Naive thymus-derived CD8-positive, alpha-beta T cell (primary cell): ENCODE measurements at regions of chr11 and their contacts with region 1.

Region 1: GRCh38 chr11:95231127-95231880 is at the start of gene SESN3:
- DNase-seq: peak; percentile 94 to 99 (median 99)
- ATAC-seq: peak; percentile 88 to 91
- H3K4me3 Mint-ChIP-seq: peak within 1 kb of the TSS in 8 of 10 donors; percentile 89 to 98 (median 94)
- H3K27ac Mint-ChIP-seq: peak within 1 kb of the TSS; percentile 66 to 95 (median 86)
- H3K4me1 Mint-ChIP-seq: peaks cover 8 to 65% (median 32%) of the 10 kb centered on the region in 4 donors
- H3K27me3 Mint-ChIP-seq: no peaks in the 10 kb centered on the region
- polyA plus RNA-seq, gene SESN3: 1.3 to 1.8 (median 1.7) TPM

Region 2: DNA sequence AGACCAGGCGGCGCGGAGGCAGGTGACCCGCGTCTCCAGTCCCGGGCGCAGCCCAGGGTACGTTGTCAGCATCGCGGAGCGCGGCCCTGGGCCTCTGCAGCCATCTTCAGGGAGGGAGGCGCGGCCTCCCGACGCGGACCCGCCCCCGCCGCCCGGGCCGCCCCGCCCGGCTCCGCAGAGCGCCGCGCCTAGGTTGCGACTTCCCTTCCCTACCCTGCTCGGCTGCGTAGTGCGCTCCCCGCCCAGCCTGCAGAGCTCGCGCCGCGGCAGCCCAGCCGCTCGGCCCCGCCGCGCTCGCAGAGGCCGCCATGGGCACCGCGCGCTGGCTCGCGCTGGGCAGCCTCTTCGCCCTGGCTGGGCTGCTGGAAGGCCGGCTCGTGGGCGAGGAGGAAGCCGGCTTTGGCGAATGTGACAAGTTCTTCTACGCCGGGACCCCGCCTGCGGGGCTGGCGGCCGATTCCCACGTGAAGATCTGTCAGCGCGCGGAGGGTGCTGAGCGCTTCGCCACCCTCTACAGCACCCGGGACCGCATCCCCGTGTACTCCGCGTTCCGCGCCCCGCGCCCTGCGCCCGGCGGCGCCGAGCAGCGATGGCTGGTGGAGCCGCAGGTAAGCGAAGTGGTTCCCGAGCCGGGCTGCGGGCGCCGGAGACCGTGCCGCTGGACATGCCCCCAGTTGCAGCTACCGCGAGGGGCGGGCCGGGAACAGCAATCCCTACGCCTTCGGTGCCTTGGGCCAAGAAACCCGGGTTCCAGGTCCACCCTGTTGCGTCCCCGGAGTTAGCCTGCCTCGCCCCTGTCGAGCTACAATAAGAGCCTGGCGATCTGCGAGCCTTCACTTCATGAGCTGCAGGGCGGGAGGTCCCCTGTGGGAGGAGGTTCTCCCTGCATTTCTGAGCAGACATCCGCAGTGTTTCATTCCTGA is 141.4 kb before region 1 on chr11 and contains the start of gene ENDOD1:
- POLR2A ChIA-PET with region 1: interaction called, 11 read pairs
- DNase-seq: peak; percentile 78 to 89 (median 86)
- ATAC-seq: peak; percentile 91 to 94
- H3K4me3 Mint-ChIP-seq: peak within 1 kb of the TSS; percentile 87 to 97 (median 91)
- H3K27ac Mint-ChIP-seq: peak within 1 kb of the TSS; percentile 95 to 99 (median 98)
- H3K4me1 Mint-ChIP-seq: peaks cover 28 to 57% (median 46%) of the 10 kb centered on the region in 4 donors
- H3K27me3 Mint-ChIP-seq: no peaks in the 10 kb centered on the region
- polyA plus RNA-seq, gene ENDOD1: 3.9 to 10.1 (median 6.9) TPM

Region 3: DNA sequence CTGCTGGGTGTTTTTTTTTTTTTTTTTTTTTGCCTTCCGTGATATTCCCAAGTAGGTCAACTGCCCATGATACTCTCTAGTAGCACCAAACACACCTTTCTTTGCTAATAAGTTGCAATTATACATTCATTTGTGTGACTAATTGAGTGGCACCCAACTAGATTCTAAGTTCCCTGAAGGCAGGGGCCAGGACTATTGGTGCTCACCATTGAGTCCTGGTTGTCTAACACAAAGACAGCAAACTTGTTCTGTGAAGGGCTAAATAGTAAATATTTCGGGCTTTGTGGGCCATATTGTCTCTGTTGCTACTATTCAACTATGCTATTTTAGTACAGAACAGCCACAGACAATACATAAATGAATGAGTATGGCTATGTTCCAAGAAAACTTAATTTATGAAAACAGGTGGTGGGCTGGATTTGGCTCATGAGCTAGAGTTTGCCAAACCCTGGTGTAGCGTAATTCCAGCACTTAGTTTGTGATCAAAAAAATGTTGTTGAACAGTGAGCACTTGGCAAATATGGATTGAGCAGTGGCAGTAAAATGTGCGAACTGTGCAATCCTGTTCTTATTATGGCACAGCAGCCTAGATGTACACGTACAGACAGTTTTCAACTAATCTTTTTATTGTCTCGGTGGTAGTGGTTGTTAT is 130.3 kb before region 1 on chr11:
- POLR2A ChIA-PET with region 1: no interaction called
- DNase-seq: no peak
- ATAC-seq: no peak
- H3K4me3 Mint-ChIP-seq: no peak overlapping the region
- H3K27ac Mint-ChIP-seq: no peak overlapping the region
- H3K4me1 Mint-ChIP-seq: peaks cover 9 to 40% (median 27%) of the 10 kb centered on the region in 4 donors
- H3K27me3 Mint-ChIP-seq: no peaks in the 10 kb centered on the region

Region 4: GRCh38 chr11:95212609-95213008 is 18.7 kb before region 1 on chr11:
- POLR2A ChIA-PET with region 1: interaction called, 18 read pairs
- DNase-seq: no peak
- ATAC-seq: no peak
- H3K4me3 Mint-ChIP-seq: no peak overlapping the region
- H3K27ac Mint-ChIP-seq: no peak overlapping the region
- H3K4me1 Mint-ChIP-seq: peaks cover 0 to 41% (median 13%) of the 10 kb centered on the region in 4 donors
- H3K27me3 Mint-ChIP-seq: no peaks in the 10 kb centered on the region

Region 5: DNA sequence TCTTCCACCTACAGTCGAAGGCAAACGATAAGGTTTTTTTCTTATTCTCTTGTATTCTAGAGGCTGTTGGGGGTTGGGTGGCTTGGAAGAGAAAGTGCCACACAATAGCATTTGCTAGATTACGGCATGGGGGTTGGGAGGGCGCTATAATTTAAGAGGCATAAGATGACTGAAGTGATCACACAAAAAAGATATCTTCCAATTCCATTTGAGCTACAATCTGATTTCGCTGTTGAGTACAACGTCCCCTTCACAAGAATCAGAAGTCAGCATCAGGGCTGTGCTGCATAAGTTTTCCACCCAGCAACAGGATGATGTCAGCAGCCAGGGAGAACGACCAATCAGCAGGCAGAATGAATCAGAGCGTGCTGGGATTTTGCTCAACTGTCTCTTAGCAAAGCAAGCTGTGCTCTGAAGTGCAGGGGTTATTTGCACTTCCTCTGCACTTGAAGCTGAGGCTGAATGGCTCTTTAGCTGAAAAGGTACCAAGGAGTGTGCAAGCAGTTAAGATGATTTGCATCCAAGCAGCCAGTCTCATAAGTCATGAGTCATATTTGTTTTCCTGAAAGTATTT is 22.9 kb after region 1 on chr11:
- POLR2A ChIA-PET with region 1: interaction called, 58 read pairs
- DNase-seq: peak; percentile 39 to 90 (median 78)
- ATAC-seq: peak; percentile 99 to 100
- H3K4me3 Mint-ChIP-seq: peak overlapping the region; percentile 79 to 93 (median 89)
- H3K27ac Mint-ChIP-seq: peak overlapping the region; percentile 37 to 98 (median 92)
- H3K4me1 Mint-ChIP-seq: peaks cover 10 to 61% (median 33%) of the 10 kb centered on the region in 4 donors
- H3K27me3 Mint-ChIP-seq: no peaks in the 10 kb centered on the region

Region 6: GRCh38 chr11:95282291-95282751 is 51.0 kb after region 1 on chr11:
- POLR2A ChIA-PET with region 1: no interaction called
- DNase-seq: no peak
- ATAC-seq: no peak
- H3K4me3 Mint-ChIP-seq: no peak overlapping the region
- H3K27ac Mint-ChIP-seq: no peak overlapping the region
- H3K4me1 Mint-ChIP-seq: peaks cover 0 to 19% (median 0%) of the 10 kb centered on the region in 4 donors
- H3K27me3 Mint-ChIP-seq: peaks cover 0 to 3% (median 0%) of the 10 kb centered on the region in 5 donors

Region 7: DNA sequence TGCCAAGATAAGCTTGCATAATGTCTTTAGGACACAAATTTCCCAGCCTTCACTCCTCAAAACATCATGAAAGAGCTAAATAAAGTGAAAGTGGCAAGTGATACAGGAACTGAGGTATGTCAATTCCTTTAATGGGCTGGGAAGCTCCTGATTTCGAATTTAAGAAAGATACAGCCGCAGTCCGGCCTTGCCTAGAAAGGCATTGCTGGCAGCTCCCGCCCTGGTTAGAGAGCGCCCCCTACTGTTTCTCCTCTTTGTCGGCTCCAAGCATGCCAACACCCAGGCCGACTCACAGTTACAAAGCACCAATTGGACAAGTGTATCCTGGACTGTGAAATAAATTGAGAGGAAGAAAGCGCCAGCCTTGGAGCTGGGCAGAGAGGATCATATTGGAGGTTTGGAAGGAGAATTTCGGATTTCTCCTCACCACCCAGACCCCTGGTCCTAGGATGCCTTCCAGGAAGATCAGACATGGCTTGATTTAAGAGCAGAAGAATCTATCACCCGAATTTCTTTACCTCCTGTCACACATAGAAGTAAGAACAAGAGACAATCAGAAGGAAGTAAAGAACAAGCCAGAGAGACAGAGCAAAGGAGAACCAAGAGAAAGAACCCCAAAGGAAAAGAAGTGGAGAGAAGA is 474.3 kb after region 1 on chr11:
- POLR2A ChIA-PET with region 1: interaction called, 42 read pairs
- DNase-seq: peak; percentile 61 to 92 (median 82)
- ATAC-seq: peak; percentile 96
- H3K4me3 Mint-ChIP-seq: no peak overlapping the region
- H3K27ac Mint-ChIP-seq: no peak overlapping the region
- H3K4me1 Mint-ChIP-seq: peaks cover 0 to 9% (median 9%) of the 10 kb centered on the region in 4 donors
- H3K27me3 Mint-ChIP-seq: no peaks in the 10 kb centered on the region